ENCODE measurements at regions of chr2 and their contacts with region 1.

Region 1: GRCh38 chr2:239399111-239399920 is 1.5 kb downstream of the HDAC4 start:
- DNase-seq: no peak
- H3K4me3 ChIP-seq: peak overlapping the region; percentile 83
- H3K27ac ChIP-seq: peak overlapping the region; percentile 100
- H3K4me1 ChIP-seq: peaks cover 69% of the 10 kb centered on the region
- H3K27me3 ChIP-seq: no peaks in the 10 kb centered on the region
- CTCF ChIP-seq: no peak

Region 2: GRCh38 chr2:239326831-239327535 is 72.3 kb before region 1 on chr2:
- intact Hi-C with region 1: loop called (anchors 10 kb)
- DNase-seq: no peak
- H3K4me3 ChIP-seq: no peak overlapping the region
- H3K27ac ChIP-seq: peak overlapping the region; percentile 95
- H3K4me1 ChIP-seq: peaks cover 76% of the 10 kb centered on the region
- H3K27me3 ChIP-seq: no peaks in the 10 kb centered on the region
- CTCF ChIP-seq: no peak